ENCODE measurements at regions of chr7 and their contacts with region 1.

Region 1: GRCh38 chr7:76509931-76510877 is at the start of gene UPK3B:
- DNase-seq: peak; percentile 63
- H3K4me3 ChIP-seq: no peak within 1 kb of the TSS
- H3K27ac ChIP-seq: no peak within 1 kb of the TSS
- H3K4me1 ChIP-seq: peaks cover 0 to 7% (median 3%) of the 10 kb centered on the region in 4 donors
- H3K27me3 ChIP-seq: no peaks in the 10 kb centered on the region
- CTCF ChIP-seq: no peak
- EP300 ChIP-seq: no peak
- POLR2A ChIP-seq: no peak
- total RNA-seq, gene UPK3B: 0.27 to 3.9 (median 0.77) TPM

Region 2: DNA sequence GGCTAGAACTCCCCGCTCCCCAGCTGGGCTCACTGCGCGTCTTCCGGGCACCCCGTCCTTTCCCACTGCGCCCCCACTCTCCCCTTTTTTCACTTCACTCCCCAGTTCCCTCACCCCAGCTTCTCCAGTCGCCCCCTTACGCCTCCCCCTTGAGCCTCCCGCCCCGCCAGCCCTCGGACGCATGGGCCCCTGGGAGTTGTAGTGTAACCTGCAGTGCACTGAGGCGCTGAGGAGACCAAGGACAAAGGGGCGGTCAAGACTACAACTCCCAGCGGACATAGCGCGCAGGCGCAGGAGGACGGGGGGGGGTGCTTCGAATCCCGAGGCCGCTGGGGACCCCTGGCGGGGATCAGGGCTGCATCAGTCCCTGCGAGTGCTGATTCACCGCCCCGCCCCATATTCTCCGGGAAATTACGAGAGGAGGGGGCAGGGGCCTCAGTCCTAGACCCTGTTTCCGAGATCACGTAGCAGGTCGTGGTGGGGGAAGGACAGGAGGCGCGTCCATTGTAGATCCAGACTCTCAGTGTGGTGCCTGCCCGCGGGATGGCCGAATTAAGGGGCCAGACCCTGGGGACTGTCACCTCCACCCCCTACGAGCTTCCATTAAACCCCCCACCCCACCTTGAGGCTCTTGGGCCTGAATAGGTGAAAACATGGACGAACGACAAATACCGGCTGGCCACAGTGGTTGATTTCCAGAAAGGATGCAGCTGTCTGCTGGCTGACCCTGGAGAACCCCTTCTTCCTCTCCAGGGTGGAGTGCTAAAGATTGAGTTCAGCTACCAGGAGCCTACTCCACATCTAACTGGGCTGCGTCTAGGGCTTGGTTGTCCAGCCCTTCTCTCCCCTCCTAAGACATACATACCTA is 150.9 kb before region 1 on chr7:
- intact Hi-C with region 1: no loop called
- DNase-seq: peak; percentile 99
- H3K4me3 ChIP-seq: peak overlapping the region; percentile 60 to 98 (median 82)
- H3K27ac ChIP-seq: peak overlapping the region; percentile 90 to 100 (median 98)
- H3K4me1 ChIP-seq: peaks cover 4 to 45% (median 40%) of the 10 kb centered on the region in 4 donors
- H3K27me3 ChIP-seq: no peaks in the 10 kb centered on the region
- CTCF ChIP-seq: peak; percentile 52 to 79 (median 74)
- EP300 ChIP-seq: peak in 2 of 4 donors; percentile 33 to 58
- POLR2A ChIP-seq: peak; percentile 15 to 50

Region 3: GRCh38 chr7:76997381-76997780 is 487.2 kb after region 1 on chr7:
- intact Hi-C with region 1: loop called (anchors 10 kb)
- DNase-seq: peak; percentile 66
- H3K4me3 ChIP-seq: no peak overlapping the region
- H3K27ac ChIP-seq: no peak overlapping the region
- H3K4me1 ChIP-seq: no peaks in the 10 kb centered on the region
- H3K27me3 ChIP-seq: no peaks in the 10 kb centered on the region
- CTCF ChIP-seq: no peak
- EP300 ChIP-seq: no peak
- POLR2A ChIP-seq: no peak

Measured in sigmoid colon (tissue), 7 donors.